ENCODE measurements at regions of chr7 and their contacts with region 1.

Region 1: GRCh38 chr7:158863611-158864506 is 7.5 kb downstream of the DYNC2I1 start:
- DNase-seq: peak; percentile 60
- H3K4me3 Mint-ChIP-seq: peak overlapping the region; percentile 76
- H3K27ac Mint-ChIP-seq: peak overlapping the region; percentile 81
- H3K4me1 Mint-ChIP-seq: peaks cover 49% of the 10 kb centered on the region
- H3K27me3 Mint-ChIP-seq: no peaks in the 10 kb centered on the region

Region 2: DNA sequence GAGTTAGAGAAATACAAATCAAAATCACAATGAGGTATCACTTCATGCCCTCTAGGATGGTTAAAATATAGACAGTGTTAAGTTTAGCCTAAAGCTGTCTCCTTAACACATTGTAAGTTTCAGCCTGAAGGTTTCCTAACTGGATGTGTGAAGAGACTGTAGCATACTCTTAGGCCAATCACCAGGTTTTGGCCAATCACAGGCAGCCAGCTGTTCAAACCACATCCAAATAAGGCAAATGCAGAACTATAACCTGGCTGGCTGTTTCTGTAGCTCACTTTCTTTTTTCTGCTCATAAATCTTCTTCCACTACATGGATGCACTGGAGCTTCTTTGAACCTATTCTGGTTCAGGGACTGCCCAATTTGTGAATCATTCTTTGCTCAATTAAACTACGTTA is 54.3 kb before region 1 on chr7:
- CTCF ChIA-PET with region 1: no interaction called
- POLR2A ChIA-PET with region 1: interaction called, 16 read pairs
- DNase-seq: no peak
- H3K4me3 Mint-ChIP-seq: peak overlapping the region; percentile 3
- H3K27ac Mint-ChIP-seq: peak overlapping the region; percentile 65
- H3K4me1 Mint-ChIP-seq: peaks cover 63% of the 10 kb centered on the region
- H3K27me3 Mint-ChIP-seq: no peaks in the 10 kb centered on the region

Region 3: GRCh38 chr7:158818325-158819213 is 45.3 kb before region 1 on chr7:
- CTCF ChIA-PET with region 1: interaction called, 3 read pairs
- POLR2A ChIA-PET with region 1: interaction called, 16 read pairs
- DNase-seq: peak; percentile 83
- H3K4me3 Mint-ChIP-seq: peak overlapping the region; percentile 87
- H3K27ac Mint-ChIP-seq: peak overlapping the region; percentile 92
- H3K4me1 Mint-ChIP-seq: peaks cover 91% of the 10 kb centered on the region
- H3K27me3 Mint-ChIP-seq: no peaks in the 10 kb centered on the region

Region 4: DNA sequence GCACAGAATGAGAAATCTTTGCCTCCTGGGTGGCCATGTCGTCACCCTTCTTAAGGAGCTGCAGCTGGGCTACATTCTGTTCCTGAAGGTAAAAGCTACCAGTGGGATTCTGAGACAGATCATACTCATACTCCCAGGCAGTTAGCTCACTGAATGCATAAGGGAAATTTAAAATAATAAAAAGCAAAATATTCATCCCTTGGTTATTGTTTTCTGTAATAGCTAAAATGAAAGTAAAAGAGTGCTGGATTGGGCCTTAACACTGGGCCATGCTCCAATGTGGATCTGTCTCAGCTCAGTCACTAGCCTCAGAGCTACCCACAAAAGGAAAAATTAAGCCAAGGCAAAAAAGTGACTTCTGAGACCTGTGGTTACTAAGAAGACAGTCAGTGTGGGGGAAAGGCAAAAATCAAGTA is 16.4 kb before region 1 on chr7:
- CTCF ChIA-PET with region 1: interaction called, 6 read pairs
- POLR2A ChIA-PET with region 1: interaction called, 15 read pairs
- DNase-seq: peak; percentile 17
- H3K4me3 Mint-ChIP-seq: peak overlapping the region; percentile 73
- H3K27ac Mint-ChIP-seq: peak overlapping the region; percentile 88
- H3K4me1 Mint-ChIP-seq: peaks cover 26% of the 10 kb centered on the region
- H3K27me3 Mint-ChIP-seq: peaks cover 3% of the 10 kb centered on the region

Region 5: GRCh38 chr7:158891922-158892321 is 28.1 kb after region 1 on chr7:
- CTCF ChIA-PET with region 1: no interaction called
- POLR2A ChIA-PET with region 1: no interaction called
- DNase-seq: no peak
- H3K4me3 Mint-ChIP-seq: no peak overlapping the region
- H3K27ac Mint-ChIP-seq: no peak overlapping the region
- H3K4me1 Mint-ChIP-seq: no peaks in the 10 kb centered on the region
- H3K27me3 Mint-ChIP-seq: no peaks in the 10 kb centered on the region

Region 6: DNA sequence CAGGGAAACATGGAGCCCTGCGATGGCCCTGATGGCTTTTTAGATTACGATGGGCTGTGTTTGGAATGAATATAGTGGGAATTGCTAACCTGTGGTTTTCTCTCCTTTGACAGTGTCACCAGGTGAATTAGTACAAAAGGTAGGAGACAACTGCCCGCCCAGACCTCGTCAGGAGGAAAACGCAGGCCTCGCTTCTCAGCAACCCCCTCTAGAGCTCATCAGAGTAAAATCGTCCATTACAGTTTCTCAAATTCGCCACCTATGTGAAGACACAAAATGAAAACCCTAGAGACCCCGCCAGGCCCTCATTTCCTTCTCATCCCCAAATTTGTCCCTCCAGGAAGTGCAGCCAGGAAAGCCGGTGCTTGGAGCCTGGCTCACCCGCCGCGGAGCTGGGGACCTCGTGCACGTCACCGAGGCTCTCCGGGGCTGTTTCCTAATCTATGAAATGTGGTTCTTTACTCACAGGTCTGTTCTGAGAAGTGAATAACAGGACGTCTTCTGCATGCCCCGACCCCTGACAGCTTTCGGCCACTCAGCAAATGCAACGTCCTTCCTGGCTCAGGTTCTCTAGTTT is 137.1 kb after region 1 on chr7:
- CTCF ChIA-PET with region 1: no interaction called
- POLR2A ChIA-PET with region 1: no interaction called
- DNase-seq: no peak
- H3K4me3 Mint-ChIP-seq: no peak overlapping the region
- H3K27ac Mint-ChIP-seq: no peak overlapping the region
- H3K4me1 Mint-ChIP-seq: peaks cover 10% of the 10 kb centered on the region
- H3K27me3 Mint-ChIP-seq: peaks cover 10% of the 10 kb centered on the region

Measured in activated CD4-positive, alpha-beta memory T cell treated with anti-CD3 and anti-CD28 coated beads, Interleukin-2, amount 10 ng/mL, durations not matched to agents 7 days and 5 days (primary cell).